CD4-positive, alpha-beta memory T cell (primary cell): ENCODE measurements at regions of chr12 and their contacts with region 1.

Region 1: DNA sequence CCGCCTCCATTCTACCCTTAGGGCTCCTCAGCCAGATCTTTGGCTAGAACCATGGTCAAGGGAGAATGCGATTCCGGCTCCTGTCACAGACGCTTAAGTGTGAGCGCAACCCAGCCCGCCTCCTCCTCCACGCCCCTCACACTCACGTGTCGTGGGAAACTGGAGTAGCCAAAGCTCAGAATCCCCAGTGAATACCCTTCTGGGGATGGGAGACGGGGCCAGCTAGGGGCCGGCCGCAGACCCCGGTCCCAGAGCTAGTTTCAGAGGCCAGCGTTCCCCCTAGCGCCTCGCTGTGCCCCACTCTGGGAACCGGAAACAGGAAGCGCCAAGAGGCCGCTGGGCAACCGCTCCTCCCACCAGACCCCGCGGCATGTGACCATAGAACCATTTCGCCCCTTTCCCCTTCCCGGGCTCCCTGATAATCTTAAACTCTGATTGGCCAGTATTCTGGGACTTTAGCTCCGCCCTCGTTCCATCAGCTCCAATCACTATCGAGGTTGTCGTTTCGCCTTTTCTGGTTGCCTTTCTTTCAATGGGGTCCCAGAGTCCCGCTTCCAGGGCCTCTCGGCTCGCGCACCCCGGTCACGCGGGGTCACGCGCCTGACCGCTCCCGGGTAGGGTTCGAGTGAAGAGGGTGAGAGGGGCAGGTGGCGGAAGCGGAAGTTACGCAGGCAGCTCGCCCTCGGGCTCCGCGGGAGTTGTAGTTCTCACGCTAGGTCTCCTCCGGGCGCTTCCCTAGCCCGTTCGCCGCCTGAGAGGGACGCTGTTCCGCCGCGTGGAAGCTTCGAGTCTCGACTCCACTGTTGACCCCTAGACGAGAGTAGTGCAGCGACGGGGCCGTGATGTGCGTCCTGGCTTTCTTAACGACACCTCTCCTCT is at the start of gene M6PR:
- DNase-seq: peak; percentile 89 to 92 (median 91)
- H3K4me3 ChIP-seq: peak within 1 kb of the TSS; percentile 96 to 99
- H3K4me3 Mint-ChIP-seq: peak within 1 kb of the TSS; percentile 86 to 97 (median 96)
- H3K27ac ChIP-seq: peak within 1 kb of the TSS; percentile 96
- H3K27ac Mint-ChIP-seq: peak within 1 kb of the TSS; percentile 87 to 99 (median 95)
- H3K4me1 ChIP-seq: peaks cover 64% of the 10 kb centered on the region
- H3K4me1 Mint-ChIP-seq: peaks cover 51 to 84% (median 65%) of the 10 kb centered on the region in 4 donors
- H3K27me3 ChIP-seq: no peaks in the 10 kb centered on the region
- H3K27me3 Mint-ChIP-seq: no peaks in the 10 kb centered on the region
- total RNA-seq, gene M6PR: 226 to 247 TPM

Region 2: GRCh38 chr12:8644345-8645248 is 305.0 kb before region 1 on chr12:
- CTCF ChIA-PET with region 1: interaction called, 9 read pairs
- POLR2A ChIA-PET with region 1: interaction called, 18 read pairs
- intact Hi-C with region 1: loop called (anchors 2 kb)
- DNase-seq: peak; percentile 52 to 65 (median 59)
- H3K4me3 ChIP-seq: peak overlapping the region in 1 of 2 donors; percentile 36
- H3K4me3 Mint-ChIP-seq: peak overlapping the region; percentile 68 to 92 (median 82)
- H3K27ac ChIP-seq: peak overlapping the region; percentile 38
- H3K27ac Mint-ChIP-seq: peak overlapping the region; percentile 83 to 98 (median 94)
- H3K4me1 ChIP-seq: peaks cover 42% of the 10 kb centered on the region
- H3K4me1 Mint-ChIP-seq: peaks cover 37 to 60% (median 46%) of the 10 kb centered on the region in 4 donors
- H3K27me3 ChIP-seq: no peaks in the 10 kb centered on the region
- H3K27me3 Mint-ChIP-seq: no peaks in the 10 kb centered on the region

Region 3: DNA sequence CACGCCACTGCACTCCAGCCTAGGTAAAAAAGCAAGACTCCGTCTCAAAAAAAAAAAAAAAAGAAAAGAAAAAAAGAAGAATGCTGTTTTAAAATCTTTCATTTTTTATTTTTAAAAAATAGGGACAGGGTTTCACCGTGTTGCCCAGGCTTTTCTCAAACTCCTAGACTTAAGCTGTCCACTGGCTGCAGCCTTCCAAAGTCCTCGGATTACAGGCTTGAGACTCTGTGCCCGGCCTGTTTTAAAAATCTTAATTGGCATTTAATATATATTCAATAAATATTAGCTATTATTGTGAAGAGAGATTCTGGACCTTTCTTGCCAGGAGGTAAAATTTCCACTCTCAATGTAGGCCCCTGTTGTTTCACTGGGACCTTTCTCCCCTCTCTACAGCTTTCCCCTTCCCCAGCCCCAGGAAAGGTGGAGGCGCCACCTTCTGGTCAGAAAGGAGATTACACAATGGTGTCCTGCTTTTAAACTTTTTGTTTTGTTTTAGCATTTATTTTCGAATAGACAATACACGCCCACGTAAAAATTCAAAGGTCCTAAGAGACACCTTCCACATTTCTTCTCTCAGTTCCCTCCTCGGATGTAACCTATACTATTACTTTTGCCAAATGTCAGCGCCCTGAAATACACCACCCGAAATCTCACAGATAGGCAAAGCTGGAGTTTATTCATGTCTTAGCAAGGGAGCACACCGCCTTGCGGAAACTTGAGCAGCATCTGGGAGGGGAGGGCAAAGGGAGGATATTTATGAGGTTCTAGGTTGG is 59.1 kb before region 1 on chr12:
- CTCF ChIA-PET with region 1: interaction called, 15 read pairs
- POLR2A ChIA-PET with region 1: interaction called, 3 read pairs
- intact Hi-C with region 1: no loop called
- DNase-seq: peak; percentile 52 to 68 (median 62)
- H3K4me3 ChIP-seq: peak overlapping the region; percentile 44 to 49
- H3K4me3 Mint-ChIP-seq: peak overlapping the region; percentile 88 to 96 (median 94)
- H3K27ac ChIP-seq: peak overlapping the region; percentile 29
- H3K27ac Mint-ChIP-seq: peak overlapping the region in 6 of 7 donors; percentile 81 to 93 (median 84)
- H3K4me1 ChIP-seq: no peaks in the 10 kb centered on the region
- H3K4me1 Mint-ChIP-seq: peaks cover 0 to 6% (median 5%) of the 10 kb centered on the region in 4 donors
- H3K27me3 ChIP-seq: no peaks in the 10 kb centered on the region
- H3K27me3 Mint-ChIP-seq: no peaks in the 10 kb centered on the region

Region 4: DNA sequence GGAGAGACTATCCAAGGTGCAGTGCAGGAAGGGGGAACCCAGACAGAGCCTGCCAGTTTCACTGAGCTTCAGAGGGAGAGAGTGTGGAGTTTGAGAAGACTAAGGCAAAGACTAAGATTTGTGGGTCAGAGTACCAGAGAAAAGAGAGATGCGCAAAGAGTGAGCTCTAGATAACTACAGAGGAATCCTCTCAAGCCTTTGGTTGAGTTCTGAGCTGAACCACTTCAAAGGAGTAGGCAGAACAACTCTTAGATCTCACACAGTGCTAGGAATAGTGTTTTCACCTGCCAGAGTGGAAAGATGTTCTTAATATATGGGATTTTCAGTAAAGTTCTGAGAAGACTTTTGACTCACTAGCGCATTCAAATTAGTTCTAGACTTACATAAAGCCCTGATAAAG is 10.6 kb after region 1 on chr12:
- CTCF ChIA-PET with region 1: interaction called, 13 read pairs
- POLR2A ChIA-PET with region 1: interaction called, 45 read pairs
- intact Hi-C with region 1: no loop called
- DNase-seq: peak in 4 of 5 donors; percentile 49 to 59 (median 52)
- H3K4me3 ChIP-seq: peak overlapping the region in 1 of 2 donors; percentile 10
- H3K4me3 Mint-ChIP-seq: peak overlapping the region; percentile 27 to 80 (median 68)
- H3K27ac ChIP-seq: peak overlapping the region; percentile 44
- H3K27ac Mint-ChIP-seq: peak overlapping the region; percentile 90 to 96 (median 92)
- H3K4me1 ChIP-seq: peaks cover 68% of the 10 kb centered on the region
- H3K4me1 Mint-ChIP-seq: peaks cover 46 to 86% (median 59%) of the 10 kb centered on the region in 4 donors
- H3K27me3 ChIP-seq: no peaks in the 10 kb centered on the region
- H3K27me3 Mint-ChIP-seq: no peaks in the 10 kb centered on the region

Region 5: DNA sequence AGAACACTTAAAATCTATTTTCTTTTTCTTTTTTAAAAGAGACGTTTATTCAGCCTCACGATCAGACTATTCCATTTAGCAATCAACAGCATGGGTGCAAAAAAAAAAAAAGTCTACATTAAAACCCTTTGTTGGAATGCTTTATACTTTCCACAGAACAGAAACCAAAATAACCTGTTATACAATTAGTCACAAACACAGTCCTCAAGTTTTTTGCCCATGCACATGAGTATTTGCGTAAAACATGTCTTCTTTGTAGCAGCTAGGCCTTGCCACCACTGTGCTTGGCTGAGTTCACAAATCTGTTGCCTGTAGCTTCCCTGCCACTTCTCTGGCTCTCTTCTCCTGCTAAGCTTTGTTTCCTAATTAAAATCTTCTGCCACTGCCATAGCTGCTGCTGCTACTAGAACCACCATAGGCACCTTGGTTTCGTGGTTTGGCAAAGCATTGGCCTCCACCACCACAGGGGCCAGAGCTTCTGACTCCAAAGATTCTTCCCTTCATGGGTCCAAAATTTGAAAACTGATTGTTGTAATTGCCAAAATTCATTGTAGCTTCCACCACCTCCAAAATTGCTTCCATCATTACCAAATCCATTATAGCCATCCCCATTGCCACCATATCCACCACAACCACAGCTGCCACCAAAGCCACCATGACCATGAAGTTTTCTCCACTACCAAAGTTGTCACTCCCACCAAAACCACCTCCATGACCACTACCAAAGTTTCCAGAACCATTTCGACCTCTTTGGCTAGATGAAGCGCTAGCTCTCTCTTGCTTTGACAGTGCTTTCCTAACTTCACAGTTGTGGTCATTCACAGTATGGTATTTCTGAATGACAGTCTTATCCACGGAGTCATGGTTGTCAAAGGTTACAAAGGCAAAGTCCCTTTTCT is 77.8 kb after region 1 on chr12:
- CTCF ChIA-PET with region 1: interaction called, 561 read pairs
- POLR2A ChIA-PET with region 1: interaction called, 492 read pairs
- intact Hi-C with region 1: loop called (anchors 1 kb)
- DNase-seq: no peak
- H3K4me3 ChIP-seq: no peak overlapping the region
- H3K4me3 Mint-ChIP-seq: peak overlapping the region; percentile 35 to 80 (median 67)
- H3K27ac ChIP-seq: peak overlapping the region; percentile 35
- H3K27ac Mint-ChIP-seq: peak overlapping the region in 6 of 7 donors; percentile 89 to 97 (median 92)
- H3K4me1 ChIP-seq: peaks cover 87% of the 10 kb centered on the region
- H3K4me1 Mint-ChIP-seq: peaks cover 31 to 51% (median 36%) of the 10 kb centered on the region in 4 donors
- H3K27me3 ChIP-seq: no peaks in the 10 kb centered on the region
- H3K27me3 Mint-ChIP-seq: no peaks in the 10 kb centered on the region

Region 6: GRCh38 chr12:9064201-9064814 is 114.7 kb after region 1 on chr12:
- CTCF ChIA-PET with region 1: interaction called, 4 read pairs
- POLR2A ChIA-PET with region 1: interaction called, 10 read pairs
- intact Hi-C with region 1: no loop called
- DNase-seq: peak; percentile 36 to 47 (median 45)
- H3K4me3 ChIP-seq: peak overlapping the region in 1 of 2 donors; percentile 40
- H3K4me3 Mint-ChIP-seq: peak overlapping the region; percentile 71 to 87 (median 80)
- H3K27ac ChIP-seq: peak overlapping the region; percentile 15
- H3K27ac Mint-ChIP-seq: peak overlapping the region in 4 of 7 donors; percentile 1 to 72 (median 18)
- H3K4me1 ChIP-seq: peaks cover 8% of the 10 kb centered on the region
- H3K4me1 Mint-ChIP-seq: peaks cover 6 to 13% (median 8%) of the 10 kb centered on the region in 4 donors
- H3K27me3 ChIP-seq: no peaks in the 10 kb centered on the region
- H3K27me3 Mint-ChIP-seq: no peaks in the 10 kb centered on the region

Region 7: GRCh38 chr12:9118158-9118557 is 168.6 kb after region 1 on chr12:
- CTCF ChIA-PET with region 1: no interaction called
- POLR2A ChIA-PET with region 1: no interaction called
- intact Hi-C with region 1: no loop called
- DNase-seq: no peak
- H3K4me3 ChIP-seq: no peak overlapping the region
- H3K4me3 Mint-ChIP-seq: no peak overlapping the region
- H3K27ac ChIP-seq: no peak overlapping the region
- H3K27ac Mint-ChIP-seq: no peak overlapping the region
- H3K4me1 ChIP-seq: peaks cover 9% of the 10 kb centered on the region
- H3K4me1 Mint-ChIP-seq: peaks cover 22 to 33% (median 27%) of the 10 kb centered on the region in 4 donors
- H3K27me3 ChIP-seq: no peaks in the 10 kb centered on the region
- H3K27me3 Mint-ChIP-seq: no peaks in the 10 kb centered on the region